Dendritic cell treated with granulocyte-macrophage colony-stimulating factor and Interleukin-4, amounts not matched to agents 40 ng/mL and 50 ng/mL, for 4 days (primary cell): ENCODE measurements at regions of chr7 and their contacts with region 1.

Region 1: GRCh38 chr7:30594549-30595435 is at the start of gene GARS1:
- H3K4me3 Mint-ChIP-seq: peak within 1 kb of the TSS; percentile 98
- H3K27ac Mint-ChIP-seq: peak within 1 kb of the TSS; percentile 95
- H3K4me1 Mint-ChIP-seq: peaks cover 45% of the 10 kb centered on the region
- H3K27me3 Mint-ChIP-seq: no peaks in the 10 kb centered on the region

Region 2: DNA sequence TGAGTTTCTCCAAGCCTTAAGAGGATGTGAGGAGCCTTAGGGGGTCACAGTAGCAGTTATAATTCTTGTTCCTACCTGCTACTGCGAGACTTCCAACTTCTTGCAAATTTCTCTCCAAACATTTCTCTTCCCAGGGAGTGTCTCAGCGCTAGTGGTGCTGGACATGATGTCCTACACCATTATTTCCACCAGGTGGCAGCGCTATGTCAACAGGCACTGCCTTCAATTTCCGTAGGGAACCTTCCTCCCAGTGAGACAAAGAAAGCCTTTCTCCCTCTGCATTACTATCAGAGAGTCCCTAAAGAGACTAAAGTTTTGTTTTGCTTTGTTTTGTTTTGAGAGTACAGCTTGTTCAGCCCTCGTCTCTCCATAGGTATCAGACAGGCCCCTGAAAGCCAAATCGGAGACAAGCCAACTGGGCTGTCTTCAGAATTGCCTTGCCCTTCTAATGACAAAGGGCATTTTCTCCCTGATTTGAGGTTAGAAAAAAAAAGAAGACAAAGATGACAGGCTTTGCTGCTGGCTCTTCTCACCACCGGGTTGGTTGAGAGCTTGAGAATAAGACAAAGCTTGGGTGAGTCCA is 45.9 kb before region 1 on chr7:
- intact Hi-C with region 1: loop called (anchors 2 kb)
- H3K4me3 Mint-ChIP-seq: no peak overlapping the region
- H3K27ac Mint-ChIP-seq: peak overlapping the region; percentile 62
- H3K4me1 Mint-ChIP-seq: peaks cover 34% of the 10 kb centered on the region
- H3K27me3 Mint-ChIP-seq: no peaks in the 10 kb centered on the region

Region 3: GRCh38 chr7:30851651-30852307 is 257.0 kb after region 1 on chr7:
- intact Hi-C with region 1: no loop called
- H3K4me3 Mint-ChIP-seq: no peak overlapping the region
- H3K27ac Mint-ChIP-seq: no peak overlapping the region
- H3K4me1 Mint-ChIP-seq: no peaks in the 10 kb centered on the region
- H3K27me3 Mint-ChIP-seq: no peaks in the 10 kb centered on the region